ENCODE measurements at regions of chr1 and their contacts with region 1.

Region 1: DNA sequence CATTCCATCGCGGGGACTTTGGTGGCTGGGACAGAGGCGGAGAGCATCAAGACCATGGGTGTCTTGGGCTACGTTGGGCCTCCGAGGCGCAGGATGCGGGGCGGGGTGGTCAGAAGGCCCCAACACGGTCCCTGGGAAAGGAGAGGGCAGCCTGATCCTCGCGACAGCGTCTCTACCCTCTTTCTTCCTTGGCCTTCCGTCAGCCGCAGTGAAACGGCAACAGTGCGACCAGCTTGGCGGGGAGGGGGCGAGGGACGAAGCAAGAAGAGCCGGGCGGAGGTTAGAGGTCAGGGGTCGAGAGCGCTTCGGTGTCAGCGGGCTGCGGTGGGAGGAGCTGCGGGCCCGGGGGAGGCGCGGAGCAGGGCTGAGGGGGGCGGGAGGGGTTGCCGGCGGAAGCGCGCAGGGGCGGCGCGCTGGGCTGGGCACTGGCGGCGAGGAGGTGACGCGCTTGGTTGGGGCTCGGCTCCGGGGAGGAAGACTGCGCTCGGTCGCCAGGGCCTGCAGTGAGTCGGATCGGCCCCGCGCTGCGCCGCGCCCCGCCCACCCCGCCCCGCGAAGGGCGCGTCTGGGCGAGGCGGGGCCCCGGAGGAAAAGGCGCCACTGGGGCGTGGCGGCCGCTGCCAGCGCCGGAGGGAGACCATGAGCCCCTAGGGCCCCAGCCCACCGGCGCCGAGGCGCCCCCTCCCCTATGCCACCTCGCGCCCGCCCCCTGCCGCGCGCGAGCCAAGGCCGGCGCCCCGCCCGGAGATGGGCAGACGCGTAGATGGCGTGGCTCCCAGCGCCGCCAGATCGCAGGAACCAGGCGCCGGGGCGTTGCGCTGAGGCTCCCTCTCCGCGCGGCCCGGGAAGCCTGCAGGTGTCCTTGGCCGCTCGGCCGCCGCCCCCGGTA is at the start of gene KCNC4:
- DNase-seq: peak; percentile 85
- ATAC-seq: peak; percentile 89
- H3K4me3 Mint-ChIP-seq: peak within 1 kb of the TSS; percentile 92
- H3K27ac Mint-ChIP-seq: peak within 1 kb of the TSS; percentile 90
- H3K4me1 Mint-ChIP-seq: peaks cover 32% of the 10 kb centered on the region
- H3K27me3 Mint-ChIP-seq: peaks cover 2% of the 10 kb centered on the region
- CTCF ChIP-seq: no peak
- total RNA-seq, gene KCNC4: 8.5 and 9.8 TPM in 2 replicates

Region 2: DNA sequence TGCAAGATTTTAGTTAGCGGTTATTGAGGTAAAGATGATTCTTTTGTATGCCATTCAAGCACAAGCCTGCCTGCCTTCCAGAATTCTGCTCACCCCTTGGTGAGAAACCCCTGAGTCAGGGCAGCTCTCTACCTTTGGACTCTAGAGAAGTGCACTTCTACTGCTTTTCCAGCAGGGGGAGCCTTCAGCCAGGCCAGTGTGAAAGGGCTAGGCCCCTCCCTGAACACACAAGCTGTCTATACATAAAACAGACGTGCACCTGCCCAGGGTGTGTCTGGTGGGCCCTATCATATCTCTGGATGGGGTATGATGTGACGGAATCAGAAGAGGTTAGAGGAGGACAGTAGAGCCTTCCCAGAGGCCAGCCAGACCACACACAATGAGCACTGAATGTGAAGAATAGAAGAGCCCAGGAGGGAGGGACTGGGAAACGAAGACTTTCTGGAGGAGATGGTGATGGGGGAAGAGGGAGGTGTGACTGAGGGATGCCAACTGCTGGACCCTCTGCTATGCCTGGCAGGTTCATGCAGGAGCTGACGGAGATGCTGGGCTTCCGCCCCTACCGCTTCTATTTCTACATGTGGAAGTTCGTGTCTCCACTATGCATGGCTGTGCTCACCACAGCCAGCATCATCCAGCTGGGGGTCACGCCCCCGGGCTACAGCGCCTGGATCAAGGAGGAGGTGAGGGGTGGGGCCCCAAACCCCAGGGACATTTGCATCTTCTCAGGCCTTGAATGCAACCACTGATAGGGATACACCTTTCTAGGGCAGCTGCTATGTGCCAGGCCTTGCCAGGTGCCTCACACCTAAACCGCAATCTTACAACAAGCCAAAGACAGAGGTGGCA is 12.8 kb before region 1 on chr1:
- CTCF ChIA-PET with region 1: interaction called, 24 read pairs
- POLR2A ChIA-PET with region 1: no interaction called
- intact Hi-C with region 1: no loop called
- DNase-seq: no peak
- ATAC-seq: peak; percentile 98
- H3K4me3 Mint-ChIP-seq: no peak overlapping the region
- H3K27ac Mint-ChIP-seq: no peak overlapping the region
- H3K4me1 Mint-ChIP-seq: peaks cover 3% of the 10 kb centered on the region
- H3K27me3 Mint-ChIP-seq: no peaks in the 10 kb centered on the region
- CTCF ChIP-seq: peak; percentile 36

Region 3: DNA sequence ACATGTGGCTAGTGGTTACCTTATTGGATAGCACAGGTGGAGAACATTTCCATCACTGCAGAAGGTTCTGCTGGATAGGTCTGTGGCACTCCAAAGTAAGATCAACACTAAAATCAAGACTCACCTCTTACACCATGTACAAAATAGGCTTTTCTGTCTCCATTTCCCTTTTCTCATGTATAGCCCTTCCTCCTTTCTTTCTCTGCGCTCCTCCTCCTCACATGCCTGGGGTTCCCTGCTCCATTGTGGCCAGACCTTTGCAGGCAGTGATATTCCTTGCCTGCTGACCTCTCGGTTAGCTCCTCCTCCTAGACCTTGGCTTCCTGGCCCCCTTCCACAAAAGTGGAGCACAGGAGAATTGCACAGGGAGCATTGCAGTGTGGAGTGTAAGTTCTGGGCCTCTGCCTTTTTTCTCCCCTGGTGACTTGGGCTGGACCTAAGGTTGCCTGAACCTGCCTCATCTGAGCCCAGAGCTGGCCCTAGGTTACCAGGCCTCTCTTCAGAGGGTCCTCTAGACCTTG is 96.0 kb after region 1 on chr1:
- CTCF ChIA-PET with region 1: interaction called, 67 read pairs
- POLR2A ChIA-PET with region 1: interaction called, 3 read pairs
- intact Hi-C with region 1: no loop called
- DNase-seq: no peak
- ATAC-seq: no peak
- H3K4me3 Mint-ChIP-seq: no peak overlapping the region
- H3K27ac Mint-ChIP-seq: no peak overlapping the region
- H3K4me1 Mint-ChIP-seq: no peaks in the 10 kb centered on the region
- H3K27me3 Mint-ChIP-seq: no peaks in the 10 kb centered on the region
- CTCF ChIP-seq: no peak

Region 4: DNA sequence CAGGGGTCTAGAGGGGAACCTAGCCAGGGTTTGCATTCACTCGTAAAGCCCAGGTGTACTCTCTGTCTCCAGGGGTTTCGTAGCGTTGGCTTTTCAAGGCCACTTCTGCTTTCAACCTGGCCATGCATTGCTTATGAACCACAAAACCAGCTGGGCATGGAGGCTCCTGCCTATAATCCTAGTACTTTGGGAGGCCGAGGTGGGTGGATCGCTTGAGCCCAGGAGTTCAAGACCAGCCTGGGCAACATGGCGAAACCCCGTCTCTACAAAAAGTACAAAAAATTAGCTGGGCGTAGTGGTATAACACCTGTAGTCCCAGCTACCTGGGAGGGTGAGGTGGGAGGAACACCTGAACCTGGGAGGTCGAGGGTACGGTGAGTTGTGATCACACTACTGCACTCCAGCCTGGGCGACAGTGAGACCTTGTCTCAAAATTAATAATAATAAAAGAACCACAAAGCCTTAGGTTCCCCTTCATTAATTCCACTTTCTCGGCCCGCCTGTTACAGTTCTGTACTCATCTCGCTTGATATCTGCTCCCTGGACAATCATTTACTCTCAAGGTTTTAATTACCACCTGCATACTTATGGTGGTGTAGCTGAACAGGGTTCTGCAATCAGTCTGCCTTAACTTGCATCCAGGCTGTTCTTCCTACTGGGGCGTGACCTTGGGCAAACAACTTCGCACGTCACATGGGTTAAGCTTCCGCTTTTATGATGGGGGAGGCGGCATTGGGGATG is 174.8 kb after region 1 on chr1:
- CTCF ChIA-PET with region 1: interaction called, 4 read pairs
- POLR2A ChIA-PET with region 1: interaction called, 7 read pairs
- intact Hi-C with region 1: loop called (anchors 1 kb)
- DNase-seq: peak; percentile 59
- ATAC-seq: peak; percentile 77
- H3K4me3 Mint-ChIP-seq: peak overlapping the region; percentile 55
- H3K27ac Mint-ChIP-seq: peak overlapping the region; percentile 95
- H3K4me1 Mint-ChIP-seq: peaks cover 95% of the 10 kb centered on the region
- H3K27me3 Mint-ChIP-seq: no peaks in the 10 kb centered on the region
- CTCF ChIP-seq: no peak

Region 5: DNA sequence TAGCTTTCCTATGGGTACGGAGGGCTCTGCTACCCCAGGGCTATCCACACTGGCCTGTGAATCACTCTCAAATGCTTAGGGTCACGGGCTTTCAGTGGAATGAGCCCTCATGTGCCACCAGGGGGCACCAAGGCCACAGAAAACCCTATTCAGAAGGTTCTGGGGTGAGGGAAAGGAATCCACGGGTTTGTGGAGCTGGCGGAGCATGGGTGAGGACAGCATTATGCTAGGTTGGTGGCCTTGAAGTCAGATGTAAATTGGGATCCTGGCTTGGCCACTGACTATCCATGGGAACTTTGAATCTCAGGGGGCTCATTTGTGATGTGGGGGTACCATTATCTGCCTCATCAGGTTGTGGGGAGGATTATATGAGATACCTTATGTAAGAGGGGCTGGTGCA is 202.6 kb after region 1 on chr1:
- CTCF ChIA-PET with region 1: interaction called, 21 read pairs
- POLR2A ChIA-PET with region 1: interaction called, 9 read pairs
- intact Hi-C with region 1: loop called (anchors 1 kb)
- DNase-seq: peak; percentile 56
- ATAC-seq: peak; percentile 66
- H3K4me3 Mint-ChIP-seq: peak overlapping the region; percentile 66
- H3K27ac Mint-ChIP-seq: peak overlapping the region; percentile 67
- H3K4me1 Mint-ChIP-seq: peaks cover 23% of the 10 kb centered on the region
- H3K27me3 Mint-ChIP-seq: no peaks in the 10 kb centered on the region
- CTCF ChIP-seq: no peak

Region 6: GRCh38 chr1:110495926-110496600 is 286.1 kb after region 1 on chr1:
- CTCF ChIA-PET with region 1: interaction called, 72 read pairs
- POLR2A ChIA-PET with region 1: interaction called, 6 read pairs
- intact Hi-C with region 1: loop called (anchors 1 kb)
- DNase-seq: peak; percentile 50
- ATAC-seq: peak; percentile 86
- H3K4me3 Mint-ChIP-seq: no peak overlapping the region
- H3K27ac Mint-ChIP-seq: no peak overlapping the region
- H3K4me1 Mint-ChIP-seq: no peaks in the 10 kb centered on the region
- H3K27me3 Mint-ChIP-seq: no peaks in the 10 kb centered on the region
- CTCF ChIP-seq: no peak

Measured in activated B cell treated with CpG ODN at 0.5 μM for 24 hours (primary cell).